Caco-2 (cell line): ENCODE measurements at regions of chr6 and their contacts with region 1.

Region 1: DNA sequence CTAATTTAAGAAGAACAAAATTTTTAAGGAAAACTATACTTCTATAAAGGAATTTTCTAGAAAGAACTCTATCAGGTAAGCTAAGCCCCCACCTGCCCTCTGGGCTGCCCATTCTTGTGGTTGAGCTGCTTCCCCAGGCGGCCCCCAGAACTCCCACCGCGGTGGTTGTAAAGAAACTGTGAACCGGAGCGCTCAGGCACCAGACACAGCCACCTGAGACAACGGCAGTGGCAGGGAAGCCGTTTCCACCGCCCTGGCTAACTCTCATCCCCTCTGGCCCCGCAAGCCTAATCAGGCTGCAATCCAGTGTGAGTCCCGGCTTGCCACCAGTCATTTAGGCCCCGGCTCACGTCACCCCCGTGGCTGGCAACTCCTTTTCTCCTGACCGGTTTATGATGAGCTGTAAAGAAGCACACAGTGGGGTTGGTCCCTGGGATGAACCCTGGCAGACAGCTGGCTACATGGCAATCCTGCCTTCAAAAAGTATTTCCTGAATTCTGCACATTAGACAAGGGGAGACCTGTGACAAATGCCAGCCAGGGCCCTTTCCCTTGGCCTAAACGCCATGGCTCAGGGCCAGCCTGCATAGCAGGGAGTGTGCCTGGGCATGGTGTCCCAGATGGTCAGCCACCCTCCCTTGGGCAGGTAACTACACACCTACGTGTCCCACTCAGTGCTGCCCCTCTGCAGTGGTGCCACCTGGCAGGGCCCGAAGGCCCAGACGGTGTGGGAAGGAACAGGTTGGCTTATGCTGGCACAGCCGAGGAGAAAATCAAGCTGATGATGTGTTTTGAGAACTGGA is 63.8 kb upstream of the GPR31 start:
- DNase-seq: no peak
- H3K4me3 ChIP-seq: no peak overlapping the region
- H3K4me3 Mint-ChIP-seq: peak overlapping the region; percentile 76
- H3K27ac Mint-ChIP-seq: no peak overlapping the region
- H3K4me1 ChIP-seq: peaks cover 59% of the 10 kb centered on the region
- H3K4me1 Mint-ChIP-seq: peaks cover 51% of the 10 kb centered on the region
- H3K27me3 ChIP-seq: no peaks in the 10 kb centered on the region
- H3K27me3 Mint-ChIP-seq: no peaks in the 10 kb centered on the region
- CTCF ChIP-seq: no peak

Region 2: DNA sequence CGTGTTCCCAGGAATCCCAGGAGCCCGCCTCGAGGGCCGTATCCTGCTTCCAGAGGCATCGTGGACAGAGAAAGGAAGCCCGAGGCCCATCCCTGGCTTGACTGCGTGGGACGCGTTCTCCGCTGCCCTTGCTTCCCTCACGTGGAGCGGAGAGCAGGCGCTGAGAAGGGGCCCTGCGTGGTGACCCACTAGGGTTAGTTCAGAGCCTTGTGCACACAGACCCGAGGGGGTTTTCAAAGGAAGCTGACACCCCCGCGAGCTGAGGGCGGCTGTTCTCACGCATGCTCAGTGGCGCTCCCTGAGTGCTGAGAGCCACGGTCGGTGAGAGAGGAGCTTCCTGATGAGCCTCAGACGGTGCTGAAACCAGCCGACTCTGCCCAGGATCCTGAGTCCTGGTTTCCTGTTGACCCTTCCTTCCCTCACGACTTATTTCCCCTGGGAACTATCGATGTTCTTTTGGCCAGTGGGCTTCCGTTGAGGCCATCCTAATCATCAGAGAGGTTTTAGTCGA is 127.6 kb before region 1 on chr6:
- CTCF ChIA-PET with region 1: no interaction called
- POLR2A ChIA-PET with region 1: no interaction called
- intact Hi-C with region 1: no loop called
- DNase-seq: no peak
- H3K4me3 ChIP-seq: no peak overlapping the region
- H3K4me3 Mint-ChIP-seq: no peak overlapping the region
- H3K27ac Mint-ChIP-seq: no peak overlapping the region
- H3K4me1 ChIP-seq: no peaks in the 10 kb centered on the region
- H3K4me1 Mint-ChIP-seq: no peaks in the 10 kb centered on the region
- H3K27me3 ChIP-seq: no peaks in the 10 kb centered on the region
- H3K27me3 Mint-ChIP-seq: no peaks in the 10 kb centered on the region
- CTCF ChIP-seq: no peak

Region 3: DNA sequence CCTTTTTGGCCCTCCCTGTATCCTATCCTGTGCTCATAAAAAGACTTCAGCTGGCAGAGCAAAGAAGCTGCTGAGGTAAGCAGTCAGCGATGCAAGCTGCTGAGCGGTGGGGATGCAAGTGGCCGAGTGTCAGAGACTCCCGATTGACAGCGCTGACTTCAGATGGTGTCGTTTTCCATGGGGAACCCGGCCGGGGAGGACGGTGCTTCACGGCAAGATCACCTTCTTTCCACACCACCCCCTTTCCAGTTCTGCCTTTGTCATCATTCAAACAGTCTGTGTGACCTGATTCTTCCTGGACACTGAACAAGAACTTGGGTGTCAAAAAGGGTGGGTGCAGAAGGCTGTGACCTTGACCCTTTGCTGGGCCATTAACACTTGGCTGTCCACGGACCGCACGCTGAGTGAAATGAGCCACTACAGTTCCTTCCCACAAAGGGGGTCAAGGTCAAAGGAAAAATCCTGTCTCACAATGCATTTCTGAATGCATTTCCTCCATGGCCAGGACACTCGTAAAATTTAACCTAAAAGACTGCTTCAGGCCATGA is 16.6 kb after region 1 on chr6:
- CTCF ChIA-PET with region 1: interaction called, 3 read pairs
- POLR2A ChIA-PET with region 1: no interaction called
- intact Hi-C with region 1: loop called (anchors 2 kb)
- DNase-seq: no peak
- H3K4me3 ChIP-seq: no peak overlapping the region
- H3K4me3 Mint-ChIP-seq: no peak overlapping the region
- H3K27ac Mint-ChIP-seq: peak overlapping the region; percentile 39
- H3K4me1 ChIP-seq: peaks cover 57% of the 10 kb centered on the region
- H3K4me1 Mint-ChIP-seq: peaks cover 24% of the 10 kb centered on the region
- H3K27me3 ChIP-seq: no peaks in the 10 kb centered on the region
- H3K27me3 Mint-ChIP-seq: no peaks in the 10 kb centered on the region
- CTCF ChIP-seq: no peak

Region 4: GRCh38 chr6:167285077-167285770 is 63.6 kb after region 1 on chr6:
- CTCF ChIA-PET with region 1: interaction called, 6 read pairs
- POLR2A ChIA-PET with region 1: no interaction called
- intact Hi-C with region 1: loop called (anchors 1 kb)
- DNase-seq: no peak
- H3K4me3 ChIP-seq: no peak overlapping the region
- H3K4me3 Mint-ChIP-seq: no peak overlapping the region
- H3K27ac Mint-ChIP-seq: no peak overlapping the region
- H3K4me1 ChIP-seq: peaks cover 27% of the 10 kb centered on the region
- H3K4me1 Mint-ChIP-seq: peaks cover 29% of the 10 kb centered on the region
- H3K27me3 ChIP-seq: no peaks in the 10 kb centered on the region
- H3K27me3 Mint-ChIP-seq: no peaks in the 10 kb centered on the region
- CTCF ChIP-seq: no peak

Region 5: GRCh38 chr6:167295495-167296292 is 74.1 kb after region 1 on chr6:
- CTCF ChIA-PET with region 1: no interaction called
- POLR2A ChIA-PET with region 1: no interaction called
- intact Hi-C with region 1: no loop called
- DNase-seq: no peak
- H3K4me3 ChIP-seq: no peak overlapping the region
- H3K4me3 Mint-ChIP-seq: no peak overlapping the region
- H3K27ac Mint-ChIP-seq: no peak overlapping the region
- H3K4me1 ChIP-seq: peaks cover 23% of the 10 kb centered on the region
- H3K4me1 Mint-ChIP-seq: peaks cover 6% of the 10 kb centered on the region
- H3K27me3 ChIP-seq: no peaks in the 10 kb centered on the region
- H3K27me3 Mint-ChIP-seq: no peaks in the 10 kb centered on the region
- CTCF ChIP-seq: no peak

Region 6: GRCh38 chr6:167341665-167342655 is 120.4 kb after region 1 on chr6:
- CTCF ChIA-PET with region 1: interaction called, 3 read pairs
- POLR2A ChIA-PET with region 1: no interaction called
- intact Hi-C with region 1: loop called (anchors 1 kb)
- DNase-seq: peak; percentile 89 to 93
- H3K4me3 ChIP-seq: no peak overlapping the region
- H3K4me3 Mint-ChIP-seq: peak overlapping the region; percentile 51
- H3K27ac Mint-ChIP-seq: peak overlapping the region; percentile 93
- H3K4me1 ChIP-seq: peaks cover 33% of the 10 kb centered on the region
- H3K4me1 Mint-ChIP-seq: peaks cover 56% of the 10 kb centered on the region
- H3K27me3 ChIP-seq: no peaks in the 10 kb centered on the region
- H3K27me3 Mint-ChIP-seq: no peaks in the 10 kb centered on the region
- CTCF ChIP-seq: no peak

Region 7: GRCh38 chr6:167350731-167351655 is 129.4 kb after region 1 on chr6:
- CTCF ChIA-PET with region 1: interaction called, 8 read pairs
- POLR2A ChIA-PET with region 1: interaction called, 4 read pairs
- intact Hi-C with region 1: loop called (anchors 2 kb)
- DNase-seq: peak; percentile 87 to 91
- H3K4me3 ChIP-seq: peak overlapping the region; percentile 61
- H3K4me3 Mint-ChIP-seq: peak overlapping the region; percentile 95
- H3K27ac Mint-ChIP-seq: peak overlapping the region; percentile 96
- H3K4me1 ChIP-seq: peaks cover 27% of the 10 kb centered on the region
- H3K4me1 Mint-ChIP-seq: peaks cover 24% of the 10 kb centered on the region
- H3K27me3 ChIP-seq: no peaks in the 10 kb centered on the region
- H3K27me3 Mint-ChIP-seq: no peaks in the 10 kb centered on the region
- CTCF ChIP-seq: peak; percentile 87 to 93